Endothelial cell of umbilical vein (primary cell): ENCODE measurements at regions of chr7 and their contacts with region 1.

Region 1: GRCh38 chr7:95476904-95477594 is 8.7 kb upstream of the ASB4 start:
- DNase-seq: peak; percentile 68
- H3K4me3 ChIP-seq: no peak overlapping the region
- H3K27ac ChIP-seq: no peak overlapping the region
- H3K4me1 ChIP-seq: no peaks in the 10 kb centered on the region
- H3K27me3 ChIP-seq: peaks cover 2 to 6% of the 10 kb centered on the region in 2 experiments
- CTCF ChIP-seq: peak; percentile 59 to 67
- POLR2A ChIP-seq: no peak

Region 2: DNA sequence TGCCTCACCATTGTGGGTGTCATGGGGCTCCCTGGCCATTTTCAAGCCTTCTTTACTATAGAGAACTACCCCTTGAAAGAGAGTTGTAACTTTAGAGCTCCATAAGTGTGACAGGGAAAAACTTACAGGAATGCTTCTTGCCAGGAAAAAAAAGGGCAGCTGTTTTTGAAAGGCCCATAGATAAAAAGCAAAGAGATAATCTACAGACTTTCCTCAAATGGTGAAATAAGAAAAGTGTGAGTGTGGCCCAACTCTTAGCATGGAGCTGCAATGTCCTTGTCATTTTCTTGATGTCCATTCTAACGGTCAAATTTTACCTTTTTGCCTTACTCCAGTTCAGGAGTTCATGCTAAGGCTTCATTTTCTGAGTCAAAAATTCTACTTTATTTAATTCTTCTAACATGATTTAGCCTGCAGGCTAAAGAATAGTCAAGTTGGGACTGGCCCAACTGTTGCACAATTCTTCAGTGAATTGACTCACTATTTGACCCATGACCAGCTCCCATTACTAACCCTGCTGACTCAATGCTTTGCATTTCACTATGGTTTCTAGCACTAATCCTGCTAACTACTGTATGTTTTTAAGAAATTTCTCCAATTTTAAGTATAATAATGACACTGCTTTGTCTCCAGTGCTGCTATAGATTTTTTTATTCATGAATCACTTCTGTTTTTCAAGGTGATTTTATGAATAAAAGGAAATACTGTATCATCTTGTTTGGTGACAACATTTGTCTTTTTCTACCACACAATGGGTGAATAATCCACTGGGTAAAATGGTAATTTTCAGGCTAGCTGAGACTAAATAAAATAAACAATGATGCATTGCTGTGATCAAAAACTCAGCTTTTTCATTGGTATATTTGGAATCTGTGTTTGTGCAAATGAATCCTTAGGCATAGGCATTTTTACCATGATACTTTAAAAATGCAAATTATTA is 779.7 kb before region 1 on chr7:
- CTCF ChIA-PET with region 1: interaction called, 3 read pairs
- POLR2A ChIA-PET with region 1: no interaction called
- dilution Hi-C with region 1: no loop called
- intact Hi-C with region 1: loop called (anchors 5 kb)
- DNase-seq: peak; percentile 90
- H3K4me3 ChIP-seq: no peak overlapping the region
- H3K27ac ChIP-seq: peak overlapping the region; percentile 83
- H3K4me1 ChIP-seq: peaks cover 43% of the 10 kb centered on the region
- H3K27me3 ChIP-seq: no peaks in the 10 kb centered on the region
- CTCF ChIP-seq: no peak
- POLR2A ChIP-seq: no peak

Region 3: DNA sequence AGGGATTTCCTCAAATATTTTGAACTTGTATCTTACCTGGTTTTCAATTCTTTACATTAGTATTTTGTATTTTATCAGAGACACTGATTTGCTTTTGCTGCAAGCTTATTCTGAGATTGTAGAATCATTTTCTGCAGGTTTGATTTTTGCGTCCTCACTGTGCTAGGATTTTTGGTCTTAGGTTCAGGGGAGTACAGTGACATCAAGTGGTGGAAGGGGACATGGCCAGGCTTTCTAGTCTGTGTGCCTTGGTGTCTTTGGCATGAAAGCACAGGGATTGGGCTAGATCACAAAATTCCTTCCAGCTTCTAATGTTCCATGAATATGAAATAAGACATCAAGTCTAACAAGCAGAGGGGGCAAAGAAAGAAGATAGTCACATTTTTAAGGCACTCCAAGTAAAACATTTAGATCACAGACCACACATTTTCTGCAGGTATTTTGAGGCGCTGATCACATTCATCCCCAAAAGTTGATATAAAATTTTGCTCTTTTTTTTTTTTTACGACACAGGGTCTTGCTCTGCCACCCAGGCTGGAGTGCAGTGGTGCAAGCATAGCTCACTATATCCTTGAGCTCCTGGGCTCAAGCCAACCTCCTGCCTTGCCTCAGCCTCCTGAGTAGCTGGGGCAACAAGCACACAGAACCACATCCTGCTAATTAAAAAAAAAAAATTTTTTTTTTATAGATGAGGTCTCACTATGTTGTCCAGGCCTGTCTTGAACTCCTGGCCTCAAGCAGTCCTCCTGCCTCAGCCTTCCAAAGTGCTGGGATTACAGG is 277.1 kb before region 1 on chr7:
- CTCF ChIA-PET with region 1: interaction called, 4 read pairs
- POLR2A ChIA-PET with region 1: no interaction called
- dilution Hi-C with region 1: no loop called
- intact Hi-C with region 1: loop called (anchors 2 kb)
- DNase-seq: peak; percentile 41
- H3K4me3 ChIP-seq: no peak overlapping the region
- H3K27ac ChIP-seq: no peak overlapping the region
- H3K4me1 ChIP-seq: no peaks in the 10 kb centered on the region
- H3K27me3 ChIP-seq: no peaks in the 10 kb centered on the region
- CTCF ChIP-seq: peak; percentile 49 to 65
- POLR2A ChIP-seq: no peak

Region 4: GRCh38 chr7:95342642-95343307 is 134.3 kb before region 1 on chr7:
- CTCF ChIA-PET with region 1: interaction called, 7 read pairs
- POLR2A ChIA-PET with region 1: no interaction called
- dilution Hi-C with region 1: no loop called
- intact Hi-C with region 1: loop called (anchors 2 kb)
- DNase-seq: no peak
- H3K4me3 ChIP-seq: no peak overlapping the region
- H3K27ac ChIP-seq: no peak overlapping the region
- H3K4me1 ChIP-seq: no peaks in the 10 kb centered on the region
- H3K27me3 ChIP-seq: no peaks in the 10 kb centered on the region
- CTCF ChIP-seq: no peak
- POLR2A ChIP-seq: no peak

Region 5: DNA sequence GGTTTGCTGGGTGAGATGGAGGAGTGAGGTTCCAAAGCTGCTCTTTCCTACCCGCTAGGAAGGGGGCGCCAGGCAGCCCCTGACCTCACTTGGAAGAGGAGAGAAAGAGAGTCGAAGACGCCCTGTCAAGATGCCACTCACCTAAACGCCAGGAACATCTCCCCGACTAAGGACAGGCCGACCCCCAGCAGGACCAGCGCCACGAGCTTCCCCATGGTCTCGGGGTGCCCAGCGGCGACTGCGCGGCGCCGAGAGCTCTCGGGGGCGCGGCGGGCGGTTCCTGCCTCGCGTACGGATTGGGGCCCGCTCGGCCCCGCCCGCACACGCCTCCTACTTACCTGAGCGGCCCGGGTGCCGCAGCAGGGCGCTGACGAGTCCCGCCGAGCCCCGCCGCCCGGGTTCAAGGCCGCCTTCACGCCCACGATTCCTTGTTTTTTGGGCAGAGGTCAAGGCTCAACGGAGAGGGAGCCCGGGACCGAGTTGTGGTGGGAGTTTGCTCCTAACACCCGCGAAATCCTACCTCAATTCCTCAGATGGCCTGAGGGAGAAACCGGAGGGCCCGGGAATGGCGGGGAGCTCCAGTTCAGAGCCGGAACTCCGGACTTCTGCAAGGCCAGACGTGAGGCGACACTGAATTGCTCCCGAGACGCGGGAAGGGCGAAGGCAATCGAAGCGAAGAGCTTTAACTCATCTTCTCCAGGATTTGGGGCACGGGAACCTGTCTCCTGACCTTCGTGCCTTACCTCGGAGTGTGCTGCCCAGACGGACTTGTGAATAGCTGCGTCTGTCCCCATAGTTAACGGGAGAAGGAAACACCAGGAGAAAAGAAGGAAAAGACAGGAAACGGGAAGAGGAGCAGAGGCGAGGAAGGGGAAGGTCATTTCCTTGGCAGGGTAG is 80.7 kb before region 1 on chr7 and contains the start of gene PON3:
- CTCF ChIA-PET with region 1: interaction called, 25 read pairs
- POLR2A ChIA-PET with region 1: no interaction called
- dilution Hi-C with region 1: no loop called
- intact Hi-C with region 1: loop called (anchors 2 kb)
- DNase-seq: peak; percentile 26
- H3K4me3 ChIP-seq: peak within 1 kb of the TSS; percentile 37 to 53 (median 46)
- H3K27ac ChIP-seq: no peak within 1 kb of the TSS
- H3K4me1 ChIP-seq: peaks cover 4% of the 10 kb centered on the region
- H3K27me3 ChIP-seq: no peaks in the 10 kb centered on the region
- CTCF ChIP-seq: peak in 1 of 2 donors; percentile 39
- POLR2A ChIP-seq: no peak
- total RNA-seq, gene PON3: 2.0 and 3.4 TPM in 2 replicates

Region 6: DNA sequence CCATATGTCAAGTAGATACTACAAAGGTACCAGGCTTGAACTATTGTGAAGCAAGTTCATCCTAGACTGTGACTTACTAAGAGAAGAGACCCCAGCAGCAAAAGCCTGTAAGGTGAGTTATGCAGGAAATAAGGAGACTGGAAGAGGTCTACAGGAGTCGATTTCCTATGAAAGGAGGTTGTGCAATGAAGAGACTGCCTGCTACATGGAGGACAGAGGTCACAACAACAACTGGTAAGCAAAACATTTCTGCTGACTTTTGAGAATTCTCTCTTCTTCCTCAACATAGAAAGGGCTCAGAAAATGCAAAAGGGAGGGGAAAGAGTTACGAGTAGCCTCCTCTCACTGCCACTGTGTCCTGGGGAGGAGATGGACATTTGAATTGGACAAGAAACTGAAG is 76.9 kb after region 1 on chr7:
- CTCF ChIA-PET with region 1: no interaction called
- POLR2A ChIA-PET with region 1: no interaction called
- dilution Hi-C with region 1: no loop called
- intact Hi-C with region 1: no loop called
- DNase-seq: no peak
- H3K4me3 ChIP-seq: no peak overlapping the region
- H3K27ac ChIP-seq: no peak overlapping the region
- H3K4me1 ChIP-seq: peaks cover 9% of the 10 kb centered on the region
- H3K27me3 ChIP-seq: peaks cover 0 to 2% of the 10 kb centered on the region in 2 experiments
- CTCF ChIP-seq: no peak
- POLR2A ChIP-seq: no peak

Region 7: GRCh38 chr7:95690367-95690947 is 213.4 kb after region 1 on chr7:
- CTCF ChIA-PET with region 1: interaction called, 31 read pairs
- POLR2A ChIA-PET with region 1: no interaction called
- dilution Hi-C with region 1: no loop called
- intact Hi-C with region 1: no loop called
- DNase-seq: peak; percentile 59
- H3K4me3 ChIP-seq: no peak overlapping the region
- H3K27ac ChIP-seq: no peak overlapping the region
- H3K4me1 ChIP-seq: no peaks in the 10 kb centered on the region
- H3K27me3 ChIP-seq: peaks cover 0 to 5% of the 10 kb centered on the region in 2 experiments
- CTCF ChIP-seq: peak; percentile 37 to 42
- POLR2A ChIP-seq: no peak